ENCODE measurements at regions of chr17 and their contacts with region 1.

Region 1: DNA sequence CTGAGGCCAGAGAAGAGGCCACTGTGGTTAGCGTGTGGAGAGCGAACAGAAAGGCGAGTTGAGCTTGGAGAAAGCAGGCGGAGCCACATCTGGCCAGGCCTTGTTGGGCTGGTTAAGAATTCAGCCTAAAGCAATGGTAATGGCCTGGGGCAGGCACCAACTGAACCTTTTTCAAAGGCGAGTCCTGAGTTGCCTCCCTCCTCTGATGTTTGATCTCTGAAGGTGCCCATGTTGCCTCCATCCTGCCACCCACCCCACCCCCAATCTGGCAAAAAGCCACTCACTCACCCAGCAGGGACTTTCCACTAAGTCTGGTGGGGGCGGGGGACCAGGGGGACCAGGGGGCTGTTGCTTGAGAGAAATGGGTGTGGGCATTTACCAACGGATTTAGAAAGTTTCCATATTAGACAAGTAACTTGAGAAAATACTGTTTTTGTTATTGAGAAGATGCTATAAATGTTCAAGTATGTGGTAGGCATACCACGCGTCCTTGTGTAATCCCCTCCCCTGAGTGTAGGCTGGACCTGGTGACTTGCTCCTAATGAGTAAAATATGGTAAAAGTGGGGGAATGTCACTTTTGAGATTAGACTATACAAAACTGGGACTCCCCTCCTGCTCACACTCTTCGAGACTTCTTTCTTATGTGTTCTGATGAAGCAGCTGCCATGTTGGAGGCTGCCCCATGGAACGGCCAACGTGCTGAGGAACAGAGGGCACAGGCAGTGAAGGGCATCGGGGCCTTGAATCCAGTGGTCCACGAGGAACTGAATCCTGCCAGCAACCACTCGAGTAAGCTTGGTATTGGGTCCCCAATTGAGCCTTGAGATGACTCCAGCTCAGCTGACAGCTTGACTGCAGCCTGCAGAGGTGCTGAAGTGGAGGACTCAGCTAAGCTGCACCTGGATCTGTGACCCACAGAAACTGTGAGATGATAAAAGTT is 29.9 kb upstream of the TNS4 start:
- DNase-seq: no peak
- H3K4me3 ChIP-seq: no peak overlapping the region
- CTCF ChIP-seq: no peak

Region 2: DNA sequence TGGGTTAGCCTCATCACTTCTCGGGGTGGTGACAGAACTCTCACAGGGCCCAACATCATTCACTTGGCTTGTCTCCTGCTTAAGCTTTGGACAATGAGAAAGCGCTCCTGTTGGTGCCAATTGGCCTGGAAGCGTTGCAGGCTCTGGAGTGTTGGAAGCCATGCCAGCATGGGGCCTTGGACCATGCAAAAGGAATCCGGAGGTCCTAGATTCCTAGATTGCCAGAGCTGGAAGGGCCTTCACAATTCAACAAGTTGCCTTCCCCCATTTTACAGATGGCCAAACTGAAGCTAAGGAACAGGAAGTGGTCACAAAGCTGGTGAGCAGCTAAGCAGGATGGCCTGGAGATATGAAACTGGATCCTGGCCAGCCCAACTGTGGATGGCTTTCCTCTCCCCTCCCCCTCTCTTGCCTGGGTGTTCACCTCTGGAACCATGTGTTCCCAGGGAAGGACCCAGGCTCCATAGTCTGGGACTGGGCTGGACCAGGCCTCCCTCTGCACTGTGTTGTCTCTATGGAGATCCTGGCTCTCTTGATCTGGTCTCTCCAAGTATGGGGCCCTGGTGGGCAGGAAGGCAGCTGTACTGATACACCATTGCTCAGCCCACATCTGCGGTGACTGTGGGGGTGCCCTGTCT is 94.1 kb before region 1 on chr17:
- in situ Hi-C with region 1: loop called (anchors 5 kb)
- DNase-seq: no peak
- H3K4me3 ChIP-seq: no peak overlapping the region
- CTCF ChIP-seq: no peak

Region 3: GRCh38 chr17:40461732-40462342 is 69.5 kb before region 1 on chr17:
- in situ Hi-C with region 1: loop called (anchors 5 kb)
- DNase-seq: no peak
- H3K4me3 ChIP-seq: no peak overlapping the region
- CTCF ChIP-seq: no peak

Region 4: GRCh38 chr17:40568074-40568836 is 36.9 kb after region 1 on chr17:
- in situ Hi-C with region 1: no loop called
- DNase-seq: no peak
- H3K4me3 ChIP-seq: no peak overlapping the region
- CTCF ChIP-seq: no peak